ENCODE measurements at regions of chr2 and their contacts with region 1.

Region 1: DNA sequence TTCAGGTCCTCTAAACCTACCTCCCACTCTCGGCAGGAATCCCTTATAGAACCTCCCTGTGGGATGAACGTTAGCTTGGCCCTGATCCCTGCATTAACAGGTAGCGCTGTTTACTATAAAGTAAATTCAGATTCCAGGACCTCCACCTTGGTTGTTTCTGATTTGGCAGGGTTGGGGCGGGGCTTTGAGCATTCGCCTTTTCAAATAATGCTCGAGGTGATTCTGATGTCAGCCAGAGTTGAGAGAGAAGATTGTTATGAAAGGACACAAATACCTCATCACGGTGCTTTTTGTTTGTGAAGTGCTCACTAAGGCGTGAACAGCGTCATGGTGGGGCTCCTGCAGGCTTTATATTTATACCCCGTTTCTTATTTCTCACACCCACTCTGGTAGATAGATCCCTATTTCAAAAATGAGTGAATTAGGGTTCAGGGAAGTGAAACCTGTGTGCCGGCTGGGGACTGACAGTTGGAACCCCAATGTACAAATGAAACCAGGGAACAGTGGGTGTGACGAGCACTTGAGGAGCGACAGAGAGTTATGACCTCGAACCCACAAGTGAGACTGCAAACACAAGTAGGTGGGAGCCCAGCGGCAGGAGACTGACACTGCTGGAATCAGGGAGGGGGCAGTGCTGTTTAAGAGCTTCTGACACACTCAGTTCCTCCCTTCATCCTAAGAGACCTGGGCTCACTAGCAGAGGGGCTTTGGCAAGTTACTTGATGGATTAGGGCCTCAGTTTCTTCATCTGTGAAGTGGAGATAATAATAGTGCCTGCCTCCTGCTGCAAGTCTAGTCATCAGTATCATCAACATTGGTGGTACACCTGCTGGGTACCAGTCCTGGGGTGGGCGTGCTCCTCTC is 14.2 kb upstream of the CXCR4 start:
- DNase-seq: peak; percentile 91
- H3K4me3 Mint-ChIP-seq: peak overlapping the region; percentile 76
- H3K27ac Mint-ChIP-seq: peak overlapping the region; percentile 81
- H3K4me1 Mint-ChIP-seq: peaks cover 88% of the 10 kb centered on the region
- H3K27me3 Mint-ChIP-seq: peaks cover 23% of the 10 kb centered on the region

Region 2: GRCh38 chr2:135913727-135914365 is 218.3 kb before region 1 on chr2:
- intact Hi-C with region 1: loop called (anchors 5 kb)
- DNase-seq: peak; percentile 86
- H3K4me3 Mint-ChIP-seq: no peak overlapping the region
- H3K27ac Mint-ChIP-seq: no peak overlapping the region
- H3K4me1 Mint-ChIP-seq: peaks cover 18% of the 10 kb centered on the region
- H3K27me3 Mint-ChIP-seq: no peaks in the 10 kb centered on the region

Region 3: DNA sequence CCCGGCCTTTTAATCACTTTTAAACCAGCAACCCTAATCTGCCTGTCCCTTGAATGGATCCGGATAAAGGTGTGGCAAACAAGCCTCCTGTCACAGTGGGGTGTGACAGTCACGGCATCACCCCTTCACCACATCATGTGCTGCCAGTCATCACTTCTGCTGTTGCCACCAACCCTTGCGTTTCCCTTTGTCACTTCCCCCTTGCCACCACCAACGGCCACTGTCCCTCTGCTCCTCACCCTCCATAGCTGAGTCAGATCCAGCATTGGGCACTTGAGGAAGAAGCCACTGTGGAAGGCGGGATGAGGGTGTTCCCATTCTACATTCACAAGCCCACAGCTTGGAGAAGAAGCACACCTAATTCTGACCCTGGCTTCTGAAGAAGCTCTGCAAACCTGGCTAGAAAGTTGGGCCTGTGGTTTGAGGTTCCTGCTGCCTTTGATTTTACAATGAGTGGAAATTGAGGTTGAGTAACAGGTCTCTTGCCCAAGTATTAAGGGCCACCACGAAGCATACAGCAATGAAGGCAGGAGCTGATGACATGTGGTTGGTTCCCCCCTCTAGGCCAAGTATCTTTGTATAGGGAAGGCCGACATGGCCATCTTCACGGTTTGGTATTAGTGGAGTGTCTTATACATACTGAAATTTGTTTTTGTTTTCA is 123.9 kb before region 1 on chr2:
- intact Hi-C with region 1: loop called (anchors 5 kb)
- DNase-seq: peak; percentile 85
- H3K4me3 Mint-ChIP-seq: peak overlapping the region; percentile 25
- H3K27ac Mint-ChIP-seq: peak overlapping the region; percentile 60
- H3K4me1 Mint-ChIP-seq: peaks cover 35% of the 10 kb centered on the region
- H3K27me3 Mint-ChIP-seq: no peaks in the 10 kb centered on the region

Region 4: DNA sequence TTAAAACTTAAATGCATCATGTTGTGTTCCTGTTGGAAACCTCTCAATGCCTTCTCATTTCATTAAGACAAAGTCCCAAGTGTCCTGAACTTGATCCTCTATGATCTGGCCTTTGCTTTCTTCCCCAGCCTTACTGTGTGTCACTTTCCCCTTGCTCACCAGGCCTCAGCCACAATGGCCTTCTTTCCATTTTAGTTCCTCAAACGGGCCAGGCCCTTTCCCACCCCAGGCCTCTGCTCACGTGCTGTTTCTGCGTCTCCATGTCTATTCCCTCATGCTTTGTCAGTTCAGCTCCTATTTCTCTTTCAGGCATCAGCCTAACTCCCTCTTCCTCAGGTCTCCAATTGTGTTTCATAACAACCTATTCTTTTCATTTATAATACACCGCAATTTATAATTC is 33.8 kb before region 1 on chr2:
- intact Hi-C with region 1: no loop called
- DNase-seq: no peak
- H3K4me3 Mint-ChIP-seq: no peak overlapping the region
- H3K27ac Mint-ChIP-seq: no peak overlapping the region
- H3K4me1 Mint-ChIP-seq: peaks cover 10% of the 10 kb centered on the region
- H3K27me3 Mint-ChIP-seq: no peaks in the 10 kb centered on the region

Region 5: DNA sequence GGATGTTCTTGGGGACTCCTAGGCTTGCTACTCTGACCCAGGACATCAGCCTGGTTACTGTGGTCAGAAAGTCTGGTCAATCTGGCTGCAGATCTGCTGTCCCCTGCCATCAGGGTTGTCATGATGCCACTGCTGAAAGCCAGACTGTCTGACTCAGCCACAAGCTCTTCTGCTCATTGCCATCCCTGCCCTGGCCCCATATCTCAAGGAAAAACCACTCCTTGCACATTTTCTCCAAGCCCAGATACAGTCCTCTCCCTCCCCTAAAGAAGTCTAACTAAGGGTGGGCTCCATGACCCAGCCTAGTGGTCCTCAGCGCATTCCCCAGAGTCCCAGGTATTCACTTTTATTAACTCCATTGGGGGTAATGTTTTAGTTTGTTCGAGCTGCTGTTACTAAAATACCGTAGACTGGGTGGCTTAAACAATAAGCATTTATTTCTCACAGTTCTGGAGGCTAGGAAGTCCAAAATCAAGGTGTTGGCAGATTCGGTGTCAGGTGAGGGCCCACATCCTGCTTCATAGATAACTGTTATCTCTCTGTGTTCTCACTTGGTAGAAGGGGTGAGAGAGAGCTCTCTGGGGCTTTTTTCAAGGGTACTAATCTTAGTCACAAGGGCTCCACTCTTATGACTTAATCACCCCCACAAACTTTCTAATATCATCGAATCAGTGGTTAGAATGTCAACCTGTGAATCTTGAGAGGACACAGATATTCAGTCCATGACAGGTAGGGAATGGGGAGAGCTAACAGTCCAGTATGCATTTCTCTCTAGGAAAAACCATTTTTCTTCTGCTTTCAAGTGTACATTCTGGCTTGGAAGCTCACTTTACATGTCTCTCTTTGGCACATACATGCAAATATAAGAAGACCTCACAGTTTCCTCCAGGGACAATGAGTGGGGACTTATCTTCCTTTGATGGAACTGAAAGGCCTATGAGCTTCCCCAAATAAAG is 80.5 kb after region 1 on chr2:
- intact Hi-C with region 1: loop called (anchors 1 kb)
- DNase-seq: no peak
- H3K4me3 Mint-ChIP-seq: peak overlapping the region; percentile 3
- H3K27ac Mint-ChIP-seq: peak overlapping the region; percentile 71
- H3K4me1 Mint-ChIP-seq: peaks cover 24% of the 10 kb centered on the region
- H3K27me3 Mint-ChIP-seq: peaks cover 10% of the 10 kb centered on the region

Region 6: DNA sequence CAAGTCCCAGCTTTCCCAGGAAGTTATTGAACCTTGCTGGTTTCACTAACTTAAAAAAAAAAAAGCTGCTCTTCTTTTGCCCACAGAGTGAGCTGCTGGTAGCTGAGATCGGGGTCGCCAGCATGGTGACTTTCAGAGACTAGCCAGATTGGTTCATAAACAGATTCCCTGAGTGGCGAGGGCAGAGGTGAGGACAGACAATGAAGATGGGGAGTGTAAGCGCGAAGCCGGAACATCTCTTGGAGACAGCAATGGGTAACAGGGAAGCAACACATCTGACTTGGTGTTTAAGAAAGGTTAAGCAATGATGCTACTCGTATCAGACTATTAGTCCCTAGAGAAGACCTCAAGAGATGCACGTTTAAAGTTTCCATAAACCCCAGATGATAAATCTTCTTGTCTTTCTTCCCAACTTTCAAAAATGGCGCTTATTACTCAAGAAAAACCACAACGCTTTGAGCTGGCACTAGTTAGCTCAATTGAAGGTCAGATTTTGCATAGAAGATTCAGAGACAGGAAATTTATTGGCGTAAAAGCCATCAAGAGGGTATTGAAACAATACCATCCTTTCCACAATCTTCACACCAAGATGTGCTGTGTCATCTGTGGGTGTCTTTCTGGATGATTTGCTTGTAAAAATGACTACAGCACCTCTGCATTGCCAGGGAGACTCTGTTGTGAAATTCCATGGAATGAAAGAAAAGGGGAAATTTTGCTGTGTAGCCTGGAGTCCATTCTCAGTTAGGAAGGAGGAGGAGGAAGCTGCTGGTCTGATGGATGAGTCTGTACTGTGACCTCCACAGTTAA is 178.8 kb after region 1 on chr2:
- intact Hi-C with region 1: loop called (anchors 1 kb)
- DNase-seq: no peak
- H3K4me3 Mint-ChIP-seq: peak overlapping the region; percentile 30
- H3K27ac Mint-ChIP-seq: peak overlapping the region; percentile 86
- H3K4me1 Mint-ChIP-seq: peaks cover 22% of the 10 kb centered on the region
- H3K27me3 Mint-ChIP-seq: no peaks in the 10 kb centered on the region

Region 7: DNA sequence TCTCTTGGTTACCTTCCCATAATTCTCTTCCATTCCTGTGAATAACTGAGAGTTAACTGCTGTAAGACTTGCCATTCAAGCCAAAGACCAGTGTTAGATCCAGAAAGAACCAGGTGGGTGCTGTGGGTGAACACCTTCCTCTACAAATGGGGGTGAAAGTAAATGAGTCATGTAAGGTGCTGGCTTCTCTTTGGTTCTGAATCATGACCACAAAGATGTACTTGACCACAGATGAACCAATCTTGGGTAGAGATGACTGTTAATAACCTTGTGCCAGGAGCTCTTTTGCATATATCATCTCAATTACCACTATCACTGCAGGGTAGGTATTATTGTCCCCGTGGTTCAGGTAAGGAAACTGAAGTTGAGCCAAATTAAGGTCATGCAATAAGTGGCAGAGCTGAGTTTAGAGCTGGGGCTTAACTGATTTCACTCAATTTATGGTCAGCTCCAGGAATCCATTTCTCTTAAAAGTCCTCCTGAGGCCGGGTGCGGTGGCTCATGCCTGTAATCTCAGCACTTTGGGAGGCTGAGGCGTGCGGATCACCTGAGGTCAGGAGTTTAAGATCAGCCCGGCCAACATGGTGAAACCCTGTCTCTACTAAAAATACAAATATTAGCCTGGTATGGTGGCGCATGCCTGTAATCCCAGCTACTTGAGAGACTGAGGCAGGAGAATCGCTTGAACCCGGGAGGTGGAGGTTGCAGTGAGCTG is 230.6 kb after region 1 on chr2:
- intact Hi-C with region 1: loop called (anchors 1 kb)
- DNase-seq: peak; percentile 75
- H3K4me3 Mint-ChIP-seq: peak overlapping the region; percentile 34
- H3K27ac Mint-ChIP-seq: peak overlapping the region; percentile 57
- H3K4me1 Mint-ChIP-seq: peaks cover 40% of the 10 kb centered on the region
- H3K27me3 Mint-ChIP-seq: no peaks in the 10 kb centered on the region